ENCODE measurements at regions of chr1 and their contacts with region 1.

Region 1: GRCh38 chr1:113978863-113979702 is at the start of gene OLFML3:
- DNase-seq: peak in 9 of 10 donors; percentile 46 to 95 (median 79)

Region 2: DNA sequence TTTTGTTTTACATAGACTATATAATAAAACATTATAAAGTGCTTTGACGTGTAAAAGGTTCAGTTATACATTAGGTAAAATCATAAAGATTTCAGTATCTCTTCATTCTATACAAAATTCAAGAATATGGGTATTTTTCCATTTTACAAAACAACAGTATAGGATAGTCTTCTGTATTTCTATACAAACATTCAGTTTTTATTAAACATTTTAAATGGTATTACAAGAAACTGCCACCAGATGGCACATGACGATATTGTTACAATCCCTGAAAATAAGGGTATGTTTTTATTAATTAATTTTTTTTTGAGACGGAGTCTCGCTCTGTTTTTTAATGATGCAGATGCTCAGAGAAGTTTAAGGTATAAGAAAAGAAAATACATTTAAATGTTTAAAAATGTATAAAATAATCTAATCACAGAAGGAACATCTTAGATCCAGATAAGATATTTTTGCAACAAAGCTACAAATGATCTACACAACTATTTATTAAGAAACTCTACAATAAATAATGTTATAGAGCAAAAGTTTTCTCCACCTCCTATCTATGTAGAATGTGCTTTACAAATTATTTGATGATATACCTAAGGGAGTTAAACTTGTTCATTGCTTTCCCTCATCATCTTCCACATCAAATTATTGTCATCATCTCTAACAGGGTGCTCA is 143.3 kb before region 1 on chr1:
- intact Hi-C with region 1: loop called (anchors 10 kb)
- DNase-seq: no peak

Region 3: DNA sequence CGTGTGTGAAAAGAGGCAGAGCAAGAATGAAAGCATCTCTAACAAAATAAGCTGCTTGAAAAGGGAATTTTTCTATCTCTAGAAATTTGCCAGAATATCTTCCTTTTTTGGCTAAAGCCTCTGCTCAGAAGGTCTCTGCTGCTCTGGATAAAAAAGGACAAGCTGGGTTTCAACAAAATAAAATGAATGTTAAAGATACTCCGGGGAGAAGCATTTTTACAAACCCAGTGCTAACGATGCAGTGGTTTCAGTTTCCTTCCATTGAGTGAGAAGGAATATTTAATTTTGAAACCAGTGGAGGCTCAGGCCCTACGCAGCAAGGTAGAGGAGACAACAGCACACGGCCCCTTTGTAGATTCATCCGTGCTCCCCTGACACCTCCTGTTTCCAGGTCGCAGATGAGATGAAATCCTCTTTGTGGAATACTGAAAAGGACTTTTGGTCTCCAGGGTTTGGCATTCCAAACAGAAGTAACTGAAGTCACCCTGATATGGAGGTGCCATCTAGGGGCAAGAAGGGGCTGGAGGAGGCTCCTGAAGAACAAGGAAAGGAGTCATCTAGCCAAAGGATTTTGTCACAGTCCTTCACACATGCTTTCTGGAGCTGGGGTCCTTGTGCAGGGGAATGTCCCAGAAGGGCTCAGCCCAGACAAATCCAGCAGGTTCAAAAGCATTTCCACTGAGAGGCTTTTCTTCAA is 240.2 kb after region 1 on chr1:
- intact Hi-C with region 1: loop called (anchors 5 kb)
- DNase-seq: no peak

Region 4: GRCh38 chr1:114234408-114235124 is 255.5 kb after region 1 on chr1:
- intact Hi-C with region 1: no loop called
- DNase-seq: no peak

Region 5: DNA sequence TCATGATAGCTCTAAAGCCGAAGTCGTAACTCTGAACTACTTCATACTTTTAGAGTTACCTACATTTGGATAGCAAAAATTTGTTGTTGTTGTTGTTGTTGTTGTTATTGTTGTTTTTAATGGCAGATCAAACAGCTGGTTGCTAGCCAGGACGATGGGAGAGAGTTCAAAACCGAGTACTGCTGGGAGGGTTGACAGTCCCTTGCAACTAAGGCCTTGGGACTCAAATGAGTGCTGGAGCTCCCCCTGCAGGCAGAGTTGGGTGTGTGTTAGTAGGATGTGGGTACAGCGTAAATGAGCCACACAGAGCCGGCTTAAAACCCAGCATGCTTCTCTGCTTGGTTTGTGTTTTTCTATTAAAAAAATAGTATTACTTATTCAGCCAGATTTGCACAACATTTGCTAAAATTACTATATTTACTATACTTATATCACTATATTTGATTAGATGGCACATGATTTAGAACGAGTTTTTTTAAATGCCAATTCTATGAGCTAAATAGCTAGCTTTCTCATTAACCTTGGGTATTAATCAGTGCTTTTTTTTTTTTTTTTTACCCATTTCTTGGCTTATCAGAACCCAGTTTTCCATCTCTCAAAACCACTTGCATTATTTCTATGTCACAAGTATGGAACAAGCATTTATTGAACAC is 303.8 kb after region 1 on chr1:
- intact Hi-C with region 1: loop called (anchors 1 kb)
- DNase-seq: peak; percentile 54 to 97 (median 86)

Measured in posterior cingulate gyrus (tissue), 11 donors.